Panc1 (cell line): ENCODE measurements at regions of chr3 and their contacts with region 1.

Region 1: GRCh38 chr3:21729888-21730459 is 21.0 kb downstream of the ZNF385D start:
- DNase-seq: no peak
- ATAC-seq: no peak
- H3K4me3 ChIP-seq: no peak overlapping the region
- H3K27ac ChIP-seq: peak overlapping the region; percentile 29; the same call in 1 of the 2 replicates
- H3K4me1 ChIP-seq: no peaks in the 10 kb centered on the region
- H3K27me3 ChIP-seq: no peaks in the 10 kb centered on the region
- CTCF ChIP-seq: no peak

Region 2: DNA sequence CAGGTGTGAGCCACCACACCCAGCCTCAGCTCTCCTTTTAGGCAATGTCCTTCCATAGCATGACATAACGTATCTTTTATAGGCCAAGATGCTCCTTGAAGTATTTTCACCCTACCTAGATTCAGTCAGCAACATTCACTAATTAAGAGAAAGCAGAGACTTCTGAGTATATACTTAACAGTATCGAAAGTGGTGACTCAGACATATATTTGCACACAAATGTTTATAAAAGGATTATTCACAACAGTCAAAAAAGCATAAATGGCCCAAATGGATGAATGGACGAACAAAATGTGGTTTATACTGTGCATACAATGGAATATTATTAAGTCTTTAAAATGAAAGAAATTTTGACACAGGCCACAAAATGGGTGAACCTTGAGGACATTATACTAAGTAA is 87.5 kb before region 1 on chr3:
- CTCF ChIA-PET with region 1: no interaction called
- POLR2A ChIA-PET with region 1: interaction called, 11 read pairs
- in situ Hi-C with region 1: no loop called
- intact Hi-C with region 1: no loop called
- DNase-seq: no peak
- ATAC-seq: no peak
- H3K4me3 ChIP-seq: no peak overlapping the region
- H3K27ac ChIP-seq: no peak overlapping the region; the same call in 1 of the 2 replicates
- H3K4me1 ChIP-seq: 0 out of 2 replicates have a peak, but pooled peaks cover 3% of the 10 kb centered on the region
- H3K27me3 ChIP-seq: no peaks in the 10 kb centered on the region
- CTCF ChIP-seq: no peak